ENCODE measurements at regions of chr1 and their contacts with region 1.

Region 1: GRCh38 chr1:227946624-227947385 is 927 bp downstream of the WNT9A start:
- DNase-seq: no peak
- H3K4me3 ChIP-seq: peak overlapping the region; percentile 60
- CTCF ChIP-seq: peak; percentile 80

Region 2: GRCh38 chr1:227728059-227728891 is 218.5 kb before region 1 on chr1:
- CTCF ChIA-PET with region 1: interaction called, 16 read pairs
- POLR2A ChIA-PET with region 1: interaction called, 4 read pairs
- DNase-seq: no peak
- H3K4me3 ChIP-seq: peak overlapping the region; percentile 58
- CTCF ChIP-seq: no peak

Region 3: GRCh38 chr1:227734856-227735538 is 211.8 kb before region 1 on chr1 and contains the starts of genes JMJD4 and SNAP47:
- CTCF ChIA-PET with region 1: interaction called, 16 read pairs
- POLR2A ChIA-PET with region 1: no interaction called
- DNase-seq: peak; percentile 28
- H3K4me3 ChIP-seq: peak within 1 kb of the TSS; percentile 93
- CTCF ChIP-seq: no peak

Region 4: DNA sequence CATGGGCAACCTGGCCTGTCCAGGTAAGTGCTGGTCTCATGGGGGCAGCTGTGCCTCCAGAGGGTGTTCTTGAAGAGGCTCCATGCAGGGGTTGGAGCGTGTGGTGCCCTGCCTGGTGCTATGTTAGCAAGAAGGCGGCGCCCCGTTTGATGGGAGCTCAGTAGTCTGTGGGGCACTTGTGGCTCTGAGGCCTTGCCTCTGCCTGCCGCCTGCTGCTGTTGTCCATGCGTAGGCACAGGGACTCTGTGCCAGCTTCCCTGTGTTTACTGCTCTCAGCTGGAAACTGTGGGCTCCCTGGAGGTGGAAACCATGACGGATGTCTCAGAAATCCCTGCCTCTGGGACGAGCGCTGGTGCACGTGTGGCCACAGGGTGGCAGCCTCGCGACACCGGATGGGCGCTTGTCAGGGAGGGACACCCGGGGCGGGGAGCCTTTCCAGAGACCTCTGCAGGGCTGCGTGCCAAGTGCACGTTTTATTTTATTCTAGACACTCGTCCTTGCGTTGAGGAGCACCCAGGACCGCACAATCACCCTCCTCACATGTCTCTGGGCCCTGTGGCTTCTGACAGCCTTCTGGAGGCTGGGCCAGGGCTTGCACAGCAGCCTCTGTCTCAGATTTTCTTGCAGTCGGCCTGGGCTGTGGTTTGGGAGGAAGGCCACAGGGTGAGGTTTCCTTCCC is 184.4 kb before region 1 on chr1:
- CTCF ChIA-PET with region 1: interaction called, 121 read pairs
- POLR2A ChIA-PET with region 1: interaction called, 7 read pairs
- DNase-seq: no peak
- H3K4me3 ChIP-seq: no peak overlapping the region
- CTCF ChIP-seq: peak; percentile 95

Region 5: GRCh38 chr1:227793948-227794816 is 152.6 kb before region 1 on chr1:
- CTCF ChIA-PET with region 1: interaction called, 3 read pairs
- POLR2A ChIA-PET with region 1: interaction called, 12 read pairs
- DNase-seq: peak; percentile 71
- H3K4me3 ChIP-seq: peak overlapping the region; percentile 34
- CTCF ChIP-seq: no peak

Region 6: GRCh38 chr1:227887697-227888403 is 59.0 kb before region 1 on chr1:
- CTCF ChIA-PET with region 1: no interaction called
- POLR2A ChIA-PET with region 1: no interaction called
- DNase-seq: no peak
- H3K4me3 ChIP-seq: no peak overlapping the region; the same call in 1 of the 2 replicates
- CTCF ChIP-seq: no peak

Measured in AG04449 (cell line).